ENCODE measurements at regions of chr6 and their contacts with region 1.

Region 1: GRCh38 chr6:15389765-15390723 is 144.2 kb downstream of the JARID2 start:
- DNase-seq: no peak
- H3K4me3 ChIP-seq: no peak overlapping the region
- H3K27ac ChIP-seq: no peak overlapping the region
- H3K4me1 ChIP-seq: no peaks in the 10 kb centered on the region
- H3K27me3 ChIP-seq: no peaks in the 10 kb centered on the region
- CTCF ChIP-seq: peak in 3 of 4 experiments; percentile 23 to 46 (median 41)
- POLR2A ChIP-seq: no peak

Region 2: DNA sequence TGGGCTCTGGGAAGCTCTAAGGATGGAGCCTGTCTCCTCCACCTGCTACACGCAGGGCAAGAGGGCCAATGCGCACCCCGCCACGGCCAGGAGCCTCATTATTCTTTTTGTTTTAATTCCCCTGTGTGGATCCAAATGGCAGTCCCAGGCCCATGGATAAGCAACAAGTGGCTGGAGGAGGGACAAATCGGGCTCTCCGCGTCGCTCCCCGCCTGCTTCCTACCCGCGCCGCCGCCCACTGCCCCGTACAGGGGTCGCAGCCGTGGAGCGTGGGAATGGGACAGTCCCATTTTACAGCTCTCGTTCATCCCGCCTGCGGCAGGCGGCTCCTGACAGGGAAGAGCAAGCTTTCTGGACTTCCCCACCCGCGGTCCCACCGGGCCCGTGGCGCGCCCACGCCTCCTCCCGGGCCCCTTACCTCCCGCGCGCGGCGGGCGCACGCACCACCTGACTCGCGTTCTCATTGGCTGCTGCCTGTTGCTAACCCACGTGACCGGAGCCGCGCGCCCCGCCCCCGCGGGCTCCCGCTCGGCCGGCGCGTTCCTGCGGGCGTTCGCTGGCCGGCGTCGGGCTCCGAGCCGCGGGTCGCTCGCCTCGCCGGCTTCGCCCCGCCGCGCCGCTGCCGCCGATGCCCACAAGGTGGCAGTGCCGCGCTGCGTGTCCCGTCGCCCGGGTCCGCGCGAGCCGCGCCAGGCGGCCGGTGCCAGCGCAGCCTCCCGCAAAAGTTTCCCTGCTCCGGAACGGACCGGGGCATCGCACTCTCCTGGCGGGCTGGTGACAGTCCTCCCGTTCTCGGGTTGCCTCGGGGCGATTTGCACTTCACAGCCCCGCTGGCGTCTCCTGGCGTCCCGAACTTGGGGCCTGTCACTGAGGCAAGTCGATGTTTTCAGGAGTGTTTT is 1179.1 kb before region 1 on chr6:
- intact Hi-C with region 1: loop called (anchors 5 kb)
- DNase-seq: peak; percentile 93
- H3K4me3 ChIP-seq: peak overlapping the region; percentile 53 to 65
- H3K27ac ChIP-seq: peak overlapping the region; percentile 65 to 80
- H3K4me1 ChIP-seq: no peaks in the 10 kb centered on the region
- H3K27me3 ChIP-seq: no peaks in the 10 kb centered on the region
- CTCF ChIP-seq: peak; percentile 64 to 98 (median 90)
- POLR2A ChIP-seq: peak; percentile 21

Region 3: GRCh38 chr6:14921170-14921569 is 468.9 kb before region 1 on chr6:
- intact Hi-C with region 1: no loop called
- DNase-seq: no peak
- H3K4me3 ChIP-seq: no peak overlapping the region
- H3K27ac ChIP-seq: no peak overlapping the region
- H3K4me1 ChIP-seq: no peaks in the 10 kb centered on the region
- H3K27me3 ChIP-seq: no peaks in the 10 kb centered on the region
- CTCF ChIP-seq: no peak
- POLR2A ChIP-seq: no peak

Region 4: DNA sequence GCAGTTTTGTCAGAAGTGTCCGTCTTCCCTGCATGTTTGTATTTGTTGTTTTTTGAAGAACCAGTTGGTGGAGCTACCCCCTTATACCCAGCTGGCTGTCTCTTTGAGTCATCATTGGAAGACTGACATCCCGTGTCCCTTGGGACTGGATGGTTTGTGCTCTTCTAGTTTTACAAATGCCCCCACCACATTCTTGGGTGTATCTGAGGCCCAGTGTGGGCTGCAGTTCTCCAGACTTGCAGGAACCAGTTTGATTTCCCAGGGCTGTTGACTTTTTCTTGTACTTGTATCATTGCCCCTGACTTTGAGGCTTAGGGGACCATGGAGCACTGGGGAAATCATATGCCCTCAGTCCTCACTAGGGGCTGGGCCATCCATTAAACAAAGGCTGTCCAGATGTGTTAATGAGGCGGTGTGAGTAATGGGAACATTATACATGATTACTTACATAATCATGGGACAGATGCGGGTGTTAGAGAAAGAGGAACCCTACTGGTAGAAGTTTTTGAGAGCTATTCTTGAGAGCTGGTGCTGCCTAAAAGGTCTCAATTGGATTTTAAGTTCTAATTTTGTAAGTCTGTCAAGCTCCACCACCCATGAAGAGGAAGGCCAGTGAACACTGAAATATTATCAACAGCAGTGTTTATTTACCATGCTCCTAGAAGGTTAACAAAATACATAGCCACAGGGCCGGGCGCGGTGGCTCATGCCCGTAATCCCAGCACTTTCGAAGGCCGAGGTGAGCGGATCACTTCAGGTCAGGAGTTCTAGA is 135.8 kb before region 1 on chr6:
- intact Hi-C with region 1: loop called (anchors 10 kb)
- DNase-seq: no peak
- H3K4me3 ChIP-seq: no peak overlapping the region
- H3K27ac ChIP-seq: no peak overlapping the region
- H3K4me1 ChIP-seq: peaks cover 10% of the 10 kb centered on the region
- H3K27me3 ChIP-seq: no peaks in the 10 kb centered on the region
- CTCF ChIP-seq: peak in 1 of 4 experiments; percentile 18
- POLR2A ChIP-seq: no peak